Breast epithelium (tissue), 4 donors: ENCODE measurements at regions of chr1 and their contacts with region 1.

Region 1: GRCh38 chr1:53681977-53682685 is 56.8 kb downstream of the GLIS1 start:
- DNase-seq: peak; percentile 28 to 54
- H3K4me3 ChIP-seq: no peak overlapping the region
- H3K27ac ChIP-seq: no peak overlapping the region
- H3K4me1 ChIP-seq: no peaks in the 10 kb centered on the region
- H3K27me3 ChIP-seq: peaks cover 0 to 6% of the 10 kb centered on the region in 2 donors
- CTCF ChIP-seq: peak in 2 of 3 donors; percentile 53 to 57
- POLR2A ChIP-seq: no peak

Region 2: DNA sequence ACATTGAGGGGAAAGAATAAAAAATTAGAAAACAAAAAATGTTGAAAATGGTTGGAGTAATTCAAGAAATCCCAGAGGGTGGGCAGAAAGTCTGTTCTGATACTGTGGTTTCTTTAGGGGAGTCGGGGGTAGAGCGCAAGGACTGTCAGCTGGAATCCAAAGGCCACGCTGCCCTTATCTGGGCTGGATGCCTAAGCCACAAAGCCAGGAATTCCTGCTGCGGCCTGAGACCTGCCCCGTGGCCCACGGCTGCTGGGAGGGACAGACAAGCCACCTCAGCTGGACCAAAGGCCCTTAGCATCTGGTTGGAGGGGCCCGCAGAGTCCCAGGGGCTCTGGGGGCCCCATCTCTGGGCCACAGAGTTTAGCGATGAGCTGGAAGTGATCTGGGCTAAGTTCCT is 162.7 kb before region 1 on chr1:
- intact Hi-C with region 1: loop called (anchors 2 kb)
- DNase-seq: peak in 1 of 2 donors; percentile 33
- H3K4me3 ChIP-seq: no peak overlapping the region
- H3K27ac ChIP-seq: peak overlapping the region; percentile 33 to 52
- H3K4me1 ChIP-seq: no peaks in the 10 kb centered on the region
- H3K27me3 ChIP-seq: no peaks in the 10 kb centered on the region
- CTCF ChIP-seq: no peak
- POLR2A ChIP-seq: no peak

Region 3: GRCh38 chr1:53860967-53861411 is 178.9 kb after region 1 on chr1:
- intact Hi-C with region 1: no loop called
- DNase-seq: no peak
- H3K4me3 ChIP-seq: no peak overlapping the region
- H3K27ac ChIP-seq: no peak overlapping the region
- H3K4me1 ChIP-seq: no peaks in the 10 kb centered on the region
- H3K27me3 ChIP-seq: no peaks in the 10 kb centered on the region
- CTCF ChIP-seq: peak; percentile 21 to 66 (median 50)
- POLR2A ChIP-seq: no peak

Region 4: DNA sequence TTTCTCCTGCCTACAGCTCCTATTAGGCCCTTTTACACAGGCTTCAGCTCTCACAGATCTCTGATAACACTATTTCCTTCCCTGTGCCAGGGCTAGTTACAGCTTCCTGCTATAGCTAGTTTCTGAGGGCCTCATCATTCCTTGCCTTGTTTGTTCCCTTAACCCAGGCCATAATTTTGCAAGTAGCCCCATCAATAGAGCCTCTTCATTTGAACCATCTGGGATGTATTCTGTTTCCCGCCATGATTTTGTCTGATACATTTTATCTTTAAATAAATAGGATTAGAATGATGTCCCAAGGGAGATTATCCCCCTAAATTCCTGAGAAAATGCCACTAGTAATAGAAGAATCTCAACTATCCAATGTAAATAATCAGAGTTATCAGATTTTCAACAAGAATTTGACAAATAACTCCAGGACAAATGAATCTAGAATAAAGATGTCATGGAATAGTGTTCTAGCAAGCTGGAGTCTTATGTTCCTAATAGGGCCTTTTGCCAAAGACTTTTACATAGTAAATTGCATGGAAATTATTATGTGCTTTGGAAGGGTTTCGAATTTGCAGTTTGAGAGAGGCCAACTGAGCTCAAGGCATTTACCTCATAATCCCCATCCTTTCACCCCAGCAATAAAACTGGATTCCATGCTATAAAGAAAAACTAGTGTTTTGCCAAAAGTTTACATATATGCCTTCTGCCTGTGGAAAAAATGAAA is 247.3 kb after region 1 on chr1:
- intact Hi-C with region 1: no loop called
- DNase-seq: no peak
- H3K4me3 ChIP-seq: no peak overlapping the region
- H3K27ac ChIP-seq: no peak overlapping the region
- H3K4me1 ChIP-seq: no peaks in the 10 kb centered on the region
- H3K27me3 ChIP-seq: no peaks in the 10 kb centered on the region
- CTCF ChIP-seq: no peak
- POLR2A ChIP-seq: no peak